ENCODE measurements at regions of chr2 and their contacts with region 1.

Region 1: DNA sequence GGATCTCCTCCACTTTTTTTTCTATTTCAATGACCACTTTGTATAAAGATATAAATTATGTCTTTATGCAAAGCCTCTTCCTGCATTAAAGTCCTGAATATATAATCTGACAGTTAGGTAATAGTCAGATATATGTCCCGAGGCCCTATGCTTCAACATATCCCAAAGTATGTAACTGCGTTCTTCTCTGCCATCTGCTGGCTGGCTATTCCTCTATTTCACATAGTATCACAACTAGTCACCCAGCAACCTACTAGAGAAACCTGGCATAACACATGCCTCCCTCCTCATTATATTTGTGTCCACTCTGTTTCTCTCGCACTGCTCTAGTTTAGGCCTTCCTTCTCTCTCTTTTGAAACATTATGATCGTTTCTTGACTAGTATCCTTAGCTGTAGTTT is 640.8 kb downstream of the DPP10 start:
- DNase-seq: peak in 5 of 10 donors; percentile 17 to 54 (median 22)

Region 2: DNA sequence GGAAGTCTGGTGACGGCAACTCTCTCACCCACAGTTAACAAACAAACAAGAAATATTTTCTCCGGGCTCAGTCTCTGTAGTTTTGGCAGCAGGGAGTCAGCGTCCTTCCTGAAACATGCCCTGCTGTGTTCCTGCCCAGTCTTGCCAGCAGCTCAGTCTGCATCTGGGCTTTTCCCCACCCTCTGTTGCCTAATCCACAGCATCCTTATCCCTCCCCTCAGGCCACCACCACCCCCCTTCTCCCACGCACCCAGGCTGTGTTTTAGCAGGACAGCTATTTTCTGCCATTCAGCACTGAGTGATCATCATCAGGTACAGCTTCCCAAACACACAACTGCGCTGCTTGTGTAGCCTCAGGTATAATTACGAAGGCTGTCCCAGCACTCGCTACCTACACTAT is 472.5 kb before region 1 on chr2:
- intact Hi-C with region 1: loop called (anchors 5 kb)
- DNase-seq: peak in 4 of 10 donors; percentile 2 to 69 (median 9)

Region 3: GRCh38 chr2:114729026-114729425 is 354.2 kb before region 1 on chr2:
- intact Hi-C with region 1: loop called (anchors 5 kb)
- DNase-seq: no peak

Region 4: DNA sequence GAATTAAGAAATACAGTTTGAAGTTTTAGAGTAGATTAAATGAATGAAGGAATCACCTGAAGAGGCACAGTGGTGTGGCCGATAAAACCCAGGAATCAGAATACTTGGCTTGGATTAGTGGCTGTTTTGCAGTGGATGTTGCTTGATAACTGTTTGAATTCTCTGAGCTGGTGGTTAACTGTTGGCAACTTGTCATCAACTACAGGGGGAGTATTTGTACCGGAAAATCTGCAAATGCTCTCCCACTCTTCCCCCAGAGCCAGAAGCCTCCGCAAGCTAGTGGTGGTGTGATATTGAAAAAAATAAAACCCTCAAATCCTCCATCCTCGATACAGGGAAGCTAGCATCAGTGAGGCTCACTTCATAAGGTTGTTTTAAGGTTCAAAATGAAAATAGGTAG is 314.1 kb before region 1 on chr2:
- intact Hi-C with region 1: loop called (anchors 5 kb)
- DNase-seq: no peak